GM10248 (cell line): ENCODE measurements at regions of chr3 and their contacts with region 1.

Region 1: GRCh38 chr3:170414202-170414663 is 4.4 kb upstream of the CLDN11 start:
- DNase-seq: peak; percentile 63
- CTCF ChIP-seq: peak; percentile 88

Region 2: DNA sequence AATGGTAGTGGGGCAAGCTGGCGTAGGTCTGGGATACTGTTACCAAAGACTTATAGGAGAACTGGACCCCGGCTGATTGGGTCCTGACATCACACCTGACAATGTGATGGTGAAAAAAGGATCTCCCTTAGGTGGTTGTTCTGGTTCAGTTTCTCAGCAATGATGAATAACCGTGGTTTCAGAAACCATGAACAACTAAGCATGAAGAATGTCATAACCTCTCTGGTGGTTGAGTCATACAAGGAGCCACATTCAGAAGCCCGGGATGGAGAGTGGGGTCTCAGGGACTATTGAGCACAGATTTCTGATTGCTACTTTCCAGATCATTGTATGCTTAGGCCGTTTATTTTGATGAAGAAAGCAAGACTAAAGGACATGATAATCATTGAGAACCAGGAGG is 359.0 kb before region 1 on chr3:
- CTCF ChIA-PET with region 1: no interaction called
- POLR2A ChIA-PET with region 1: no interaction called
- DNase-seq: peak; percentile 64
- CTCF ChIP-seq: no peak

Region 3: DNA sequence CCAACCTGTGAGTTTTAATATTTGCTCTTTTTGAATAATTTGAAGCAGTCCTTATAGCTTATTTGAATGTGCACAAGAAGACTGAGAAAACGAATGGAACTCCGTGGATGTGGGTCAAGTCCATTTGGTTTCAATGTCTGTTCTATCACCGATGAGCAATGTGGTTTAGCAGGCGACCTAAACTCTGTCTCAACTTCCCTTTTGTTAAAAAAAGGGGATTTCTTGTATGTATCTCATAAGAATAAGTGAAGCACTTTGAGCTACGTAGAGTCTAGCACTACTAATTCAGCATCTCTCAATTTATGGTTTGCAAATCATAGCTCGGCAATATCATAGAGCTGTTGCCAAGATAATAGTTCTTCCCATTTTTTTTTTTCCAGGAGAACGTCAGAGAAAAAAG is 61.3 kb before region 1 on chr3:
- CTCF ChIA-PET with region 1: interaction called, 10 read pairs
- POLR2A ChIA-PET with region 1: no interaction called
- DNase-seq: peak; percentile 47
- CTCF ChIP-seq: no peak

Region 4: DNA sequence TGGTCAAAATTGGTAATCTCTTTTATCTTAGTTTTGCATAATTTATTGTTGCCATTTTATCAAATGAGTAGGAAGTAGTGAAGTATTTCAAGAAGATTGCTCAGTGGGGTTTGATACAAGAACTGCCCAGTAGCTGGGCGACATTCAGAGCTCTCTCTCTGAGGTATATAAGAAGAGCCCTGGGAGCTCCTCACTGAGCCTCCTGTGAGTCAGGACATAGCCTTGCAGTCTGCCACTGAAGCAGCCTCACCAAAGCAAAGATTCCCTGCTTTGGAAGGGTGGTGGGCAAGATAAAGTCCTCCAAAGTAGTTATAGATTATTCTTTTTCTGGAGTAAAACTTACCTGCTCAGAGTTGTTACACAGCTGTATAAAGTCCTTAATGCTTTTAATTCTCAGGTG is 30.7 kb before region 1 on chr3:
- CTCF ChIA-PET with region 1: interaction called, 13 read pairs
- POLR2A ChIA-PET with region 1: no interaction called
- DNase-seq: no peak
- CTCF ChIP-seq: no peak

Region 5: GRCh38 chr3:170397579-170398177 is 16.6 kb before region 1 on chr3:
- CTCF ChIA-PET with region 1: interaction called, 29 read pairs
- POLR2A ChIA-PET with region 1: no interaction called
- DNase-seq: no peak
- CTCF ChIP-seq: no peak

Region 6: DNA sequence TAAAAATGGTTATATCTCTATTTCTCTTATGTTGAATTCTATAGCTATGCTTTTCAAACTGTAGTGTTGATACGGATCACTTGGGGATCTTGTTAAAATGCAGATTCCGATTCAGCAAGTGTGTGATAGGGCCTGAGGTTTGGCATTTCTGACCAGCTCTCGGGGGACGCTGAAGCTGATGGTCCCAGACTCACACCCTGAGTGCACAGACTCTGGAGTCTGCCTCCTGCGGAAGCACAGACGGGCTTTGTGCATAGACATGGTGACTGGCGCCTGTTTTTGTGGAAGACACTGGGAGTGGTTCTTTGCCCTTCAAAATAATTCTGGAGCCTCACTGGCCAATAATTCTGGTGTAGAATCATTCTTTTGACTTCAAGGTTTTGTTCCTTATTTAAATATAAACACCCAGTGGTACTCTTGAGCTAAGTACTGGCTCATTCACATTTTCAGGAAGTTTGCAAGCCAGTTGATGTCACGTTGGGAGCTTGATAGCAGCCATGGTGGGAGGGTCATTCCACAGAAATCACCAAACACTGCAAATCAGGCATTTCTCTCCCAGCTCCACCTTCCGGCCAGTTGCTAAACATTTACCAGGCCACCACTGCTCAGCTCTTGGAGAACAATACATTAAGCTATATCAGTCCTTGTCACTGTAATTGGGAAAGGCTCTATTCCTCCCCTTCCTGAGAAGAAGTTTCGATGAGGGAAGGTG is 23.6 kb after region 1 on chr3:
- CTCF ChIA-PET with region 1: interaction called, 26 read pairs
- POLR2A ChIA-PET with region 1: no interaction called
- DNase-seq: no peak
- CTCF ChIP-seq: no peak

Region 7: DNA sequence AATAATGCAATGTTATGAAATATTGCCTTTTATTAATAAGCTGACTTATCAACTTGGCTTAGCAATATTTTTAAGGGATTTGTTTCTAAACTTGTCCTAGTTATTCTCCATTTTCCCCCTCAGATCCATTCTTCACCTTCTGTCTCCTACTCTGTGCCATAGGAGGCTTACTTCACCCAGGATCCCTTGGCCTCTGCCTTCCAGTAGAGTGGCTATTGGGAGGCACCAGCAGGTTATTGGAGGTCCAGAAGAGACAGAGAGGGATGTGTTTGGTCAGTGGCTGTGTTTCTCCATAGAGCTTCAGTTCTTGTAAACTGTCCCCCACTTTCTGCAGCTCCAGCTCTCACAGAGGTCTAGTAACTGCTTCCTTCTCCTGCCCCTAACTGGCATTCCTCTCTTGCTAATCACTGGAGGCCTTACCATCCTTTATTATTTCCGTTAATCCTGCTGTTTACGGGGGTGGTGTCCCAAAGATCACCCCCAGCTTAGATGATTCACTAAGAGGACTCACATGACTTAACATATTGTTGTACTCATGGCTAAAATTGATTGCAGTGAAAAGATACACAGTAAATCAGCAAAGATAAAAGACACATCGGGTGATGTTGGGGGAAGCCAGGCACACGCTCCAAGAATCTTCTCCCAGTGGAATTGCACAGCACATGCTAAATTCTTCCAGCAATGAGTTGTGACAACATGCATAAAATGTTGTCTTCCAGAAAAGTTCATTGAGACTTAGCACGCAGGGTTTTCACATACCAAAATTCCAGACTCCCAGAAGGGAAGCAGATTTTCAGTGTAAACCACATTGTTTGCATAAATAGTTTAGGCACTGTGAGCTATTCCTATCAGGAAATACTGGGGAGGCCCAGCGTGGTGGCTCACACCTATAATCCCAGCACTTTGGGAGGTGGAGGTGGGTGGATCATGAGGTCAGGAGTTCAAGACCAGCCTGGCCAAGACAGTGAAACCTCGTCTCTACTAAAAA is 388.2 kb after region 1 on chr3:
- CTCF ChIA-PET with region 1: interaction called, 11 read pairs
- POLR2A ChIA-PET with region 1: no interaction called
- DNase-seq: no peak
- CTCF ChIP-seq: no peak